ENCODE measurements at regions of chr11 and their contacts with region 1.

Region 1: DNA sequence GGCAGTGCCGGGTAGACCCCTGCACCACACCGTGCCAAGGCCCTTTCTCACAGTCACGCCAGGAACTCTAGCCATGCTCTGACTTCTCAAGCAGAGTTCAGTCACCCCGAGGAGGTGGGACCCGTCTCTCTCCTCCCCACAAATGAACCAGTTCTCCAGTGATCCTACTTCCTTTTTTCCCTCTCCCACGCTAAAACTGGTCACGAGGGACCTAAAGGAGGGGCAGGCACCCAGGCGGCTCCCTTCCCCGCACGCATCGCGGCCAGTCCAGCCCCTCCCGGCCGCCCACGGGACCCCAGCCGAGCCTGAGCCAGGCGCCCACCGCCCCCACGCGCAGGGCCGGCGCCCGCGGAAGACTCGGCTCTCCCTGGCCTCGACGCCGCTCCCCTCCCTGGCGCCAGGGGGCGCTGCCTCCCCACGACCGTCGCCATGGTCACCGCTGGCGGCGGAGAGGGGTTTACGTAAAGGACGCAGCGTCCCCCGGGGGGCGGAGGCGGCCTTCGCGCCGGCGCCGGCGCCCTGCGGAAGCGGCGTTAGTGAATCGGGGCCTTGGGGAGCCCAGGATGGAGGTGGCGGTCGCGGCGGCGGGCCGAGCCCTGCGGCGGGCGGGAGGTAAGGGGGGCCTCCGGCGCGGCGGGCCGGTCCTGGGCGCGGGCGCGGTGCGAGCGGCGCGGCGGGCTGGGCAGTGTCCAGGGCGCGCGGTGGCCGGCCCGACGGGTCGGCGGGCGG is at the start of gene DAGLA:
- DNase-seq: peak; percentile 49
- ATAC-seq: peak; percentile 9
- H3K4me3 ChIP-seq: peak within 1 kb of the TSS; percentile 57 to 79 (median 74)
- H3K27ac ChIP-seq: peak within 1 kb of the TSS; percentile 68
- H3K4me1 ChIP-seq: peaks cover 67% of the 10 kb centered on the region
- H3K27me3 ChIP-seq: peaks cover 0 to 1% of the 10 kb centered on the region in 2 experiments; a peak in 2 of 5 replicates
- CTCF ChIP-seq: peak; percentile 92
- EP300 ChIP-seq: no peak
- POLR2A ChIP-seq: no peak
- RAD21 ChIP-seq: peak; percentile 83
- total RNA-seq, gene DAGLA: 2.3 and 3.9 TPM in 2 replicates

Region 2: DNA sequence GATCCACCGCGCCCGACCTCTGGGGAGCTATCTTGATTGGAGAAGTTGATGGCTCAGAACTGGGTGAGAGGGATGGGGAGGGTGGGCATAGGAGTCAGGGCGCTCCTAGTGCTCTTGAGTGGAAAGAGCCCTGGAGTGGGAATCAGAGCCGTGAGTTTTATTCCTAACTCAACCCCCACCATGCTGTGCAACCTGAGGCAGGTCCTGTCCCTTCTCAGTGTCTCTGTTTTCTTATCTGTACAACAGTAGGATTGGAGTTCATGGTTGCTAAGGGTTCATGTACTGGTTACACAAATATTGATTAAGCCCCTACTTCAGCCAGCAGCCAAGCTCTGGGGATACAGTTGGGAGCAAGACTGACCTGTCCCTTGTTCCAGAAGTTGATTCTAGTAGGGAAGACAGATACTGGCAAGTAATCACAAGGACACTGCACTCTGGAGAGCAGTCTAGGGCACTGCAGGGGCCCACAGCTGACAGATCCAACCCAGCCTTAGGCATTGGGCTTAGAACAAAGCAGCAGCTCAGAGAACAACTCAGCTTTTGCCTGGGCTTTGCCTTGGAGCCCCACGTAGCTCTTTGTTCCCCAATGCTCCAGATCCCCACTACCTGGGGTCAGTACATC is 12.3 kb before region 1 on chr11:
- CTCF ChIA-PET with region 1: interaction called, 4 read pairs
- POLR2A ChIA-PET with region 1: interaction called, 42 read pairs
- in situ Hi-C with region 1: no loop called
- intact Hi-C with region 1: no loop called
- DNase-seq: no peak
- ATAC-seq: peak; percentile 71
- H3K4me3 ChIP-seq: peak overlapping the region; percentile 16 to 55 (median 23); a peak in 4 of 6 replicates
- H3K27ac ChIP-seq: peak overlapping the region; percentile 69
- H3K4me1 ChIP-seq: peaks cover 56% of the 10 kb centered on the region
- H3K27me3 ChIP-seq: no peaks in the 10 kb centered on the region
- CTCF ChIP-seq: peak; percentile 28; the same call in 1 of the 2 replicates
- EP300 ChIP-seq: no peak
- POLR2A ChIP-seq: no peak
- RAD21 ChIP-seq: no peak

Region 3: GRCh38 chr11:61694730-61695706 is 15.0 kb after region 1 on chr11:
- CTCF ChIA-PET with region 1: no interaction called
- POLR2A ChIA-PET with region 1: interaction called, 17 read pairs
- in situ Hi-C with region 1: no loop called
- intact Hi-C with region 1: loop called (anchors 2 kb)
- DNase-seq: peak; percentile 44
- ATAC-seq: peak; percentile 78
- H3K4me3 ChIP-seq: no peak overlapping the region
- H3K27ac ChIP-seq: no peak overlapping the region
- H3K4me1 ChIP-seq: peaks cover 49% of the 10 kb centered on the region
- H3K27me3 ChIP-seq: no peaks in the 10 kb centered on the region
- CTCF ChIP-seq: peak; percentile 38
- EP300 ChIP-seq: no peak
- POLR2A ChIP-seq: no peak
- RAD21 ChIP-seq: 0 out of 2 replicates have a peak, but pooled peaks have one; percentile 37

Region 4: GRCh38 chr11:61701242-61701886 is 21.3 kb after region 1 on chr11:
- CTCF ChIA-PET with region 1: interaction called, 4 read pairs
- POLR2A ChIA-PET with region 1: interaction called, 7 read pairs
- in situ Hi-C with region 1: no loop called
- intact Hi-C with region 1: loop called (anchors 2 kb)
- DNase-seq: peak; percentile 37
- ATAC-seq: peak; percentile 73
- H3K4me3 ChIP-seq: no peak overlapping the region
- H3K27ac ChIP-seq: no peak overlapping the region
- H3K4me1 ChIP-seq: peaks cover 26% of the 10 kb centered on the region
- H3K27me3 ChIP-seq: no peaks in the 10 kb centered on the region
- CTCF ChIP-seq: peak; percentile 51
- EP300 ChIP-seq: no peak
- POLR2A ChIP-seq: no peak
- RAD21 ChIP-seq: 0 out of 2 replicates have a peak, but pooled peaks have one; percentile 26

Region 5: GRCh38 chr11:61733120-61733978 is 53.3 kb after region 1 on chr11:
- CTCF ChIA-PET with region 1: interaction called, 8 read pairs
- POLR2A ChIA-PET with region 1: interaction called, 16 read pairs
- in situ Hi-C with region 1: loop called (anchors 5 kb)
- intact Hi-C with region 1: loop called (anchors 2 kb)
- DNase-seq: peak; percentile 58
- ATAC-seq: peak; percentile 85
- H3K4me3 ChIP-seq: no peak overlapping the region
- H3K27ac ChIP-seq: no peak overlapping the region
- H3K4me1 ChIP-seq: no peaks in the 10 kb centered on the region
- H3K27me3 ChIP-seq: no peaks in the 10 kb centered on the region
- CTCF ChIP-seq: peak; percentile 98
- EP300 ChIP-seq: no peak
- POLR2A ChIP-seq: no peak
- RAD21 ChIP-seq: peak; percentile 86

Region 6: DNA sequence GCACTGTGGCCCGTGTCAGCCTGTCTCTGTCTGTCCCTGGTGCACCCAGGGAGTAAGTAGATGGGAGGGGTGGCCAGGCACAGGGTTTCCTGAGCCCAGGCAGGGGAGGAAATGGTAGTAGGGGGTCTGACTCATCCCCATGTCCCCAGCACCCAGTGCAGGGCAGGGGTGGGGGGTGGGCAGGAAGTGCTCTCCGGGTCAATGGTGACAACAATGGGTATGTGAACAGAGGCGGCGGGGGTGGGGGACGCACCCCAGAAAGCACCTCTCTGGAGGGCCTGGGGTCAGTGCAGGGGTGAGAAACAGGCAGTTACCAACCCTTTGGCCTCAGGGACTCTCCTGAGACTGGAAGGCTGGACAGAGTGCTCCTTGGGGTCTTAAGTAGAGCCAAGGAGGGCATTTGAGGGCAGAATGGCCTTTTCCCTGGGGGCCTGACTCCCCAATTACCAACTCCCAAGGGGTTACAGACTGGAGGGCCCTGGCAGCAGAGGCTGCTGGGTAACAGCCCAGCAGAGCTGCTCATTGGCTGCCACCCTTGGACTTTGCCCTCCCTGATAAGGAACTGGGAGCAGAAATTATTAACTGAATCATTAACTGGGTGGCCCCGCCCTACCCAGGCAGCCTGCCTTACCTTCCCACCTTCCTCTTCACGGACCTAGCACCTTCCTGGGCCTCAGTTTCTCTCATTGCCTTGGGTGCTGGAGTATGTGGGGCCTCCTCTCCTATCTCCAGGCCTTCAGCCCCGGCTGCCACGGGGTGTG is 76.6 kb after region 1 on chr11:
- CTCF ChIA-PET with region 1: no interaction called
- POLR2A ChIA-PET with region 1: interaction called, 14 read pairs
- in situ Hi-C with region 1: no loop called
- intact Hi-C with region 1: no loop called
- DNase-seq: peak; percentile 94
- ATAC-seq: peak; percentile 84
- H3K4me3 ChIP-seq: peak overlapping the region; percentile 32 to 69 (median 66)
- H3K27ac ChIP-seq: peak overlapping the region; percentile 100
- H3K4me1 ChIP-seq: peaks cover 71% of the 10 kb centered on the region
- H3K27me3 ChIP-seq: no peaks in the 10 kb centered on the region
- CTCF ChIP-seq: peak; percentile 10; the same call in 1 of the 2 replicates
- EP300 ChIP-seq: peak in 1 of 2 experiments; percentile 53; a peak in 2 of 4 replicates
- POLR2A ChIP-seq: peak in 1 of 2 experiments; percentile 96; a peak in 2 of 4 replicates
- RAD21 ChIP-seq: peak; percentile 33; the same call in 1 of the 2 replicates

Region 7: DNA sequence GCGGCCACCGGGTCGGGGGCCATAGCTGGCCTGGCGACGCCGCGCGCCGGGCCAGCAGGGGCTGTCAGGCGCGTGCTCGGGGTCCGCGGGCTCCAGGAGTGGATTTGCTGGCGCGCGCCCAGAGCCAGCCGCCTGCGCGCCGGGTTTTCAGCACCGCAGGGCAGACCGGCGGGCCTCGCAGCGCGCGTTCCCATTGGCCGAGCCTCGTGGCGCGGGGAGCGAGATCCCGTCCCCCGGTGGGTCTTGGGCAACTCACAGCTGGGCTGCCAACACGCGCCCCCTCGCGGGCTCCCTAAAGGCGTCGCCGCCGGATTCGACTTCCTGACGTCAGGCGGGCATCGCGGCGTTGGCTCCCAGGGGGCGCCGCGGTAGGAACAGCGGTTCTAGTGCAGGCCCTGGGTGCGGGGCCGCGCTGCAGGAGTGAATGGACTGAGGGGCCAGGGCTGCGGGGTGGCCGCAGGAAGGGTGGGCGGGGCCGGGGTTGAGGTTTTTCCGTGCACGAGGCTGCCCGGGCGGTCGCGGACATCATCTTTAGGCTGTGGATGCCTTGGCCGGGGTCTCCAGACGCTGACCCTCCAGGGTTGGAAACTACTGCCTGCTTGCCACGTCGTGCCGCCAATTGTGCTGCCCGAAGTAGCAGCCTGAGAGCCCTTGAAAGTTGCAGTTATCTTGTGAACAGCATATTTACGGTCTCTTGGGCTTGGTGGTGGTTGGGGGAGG is 136.8 kb after region 1 on chr11 and contains the start of gene FADS1:
- CTCF ChIA-PET with region 1: no interaction called
- POLR2A ChIA-PET with region 1: no interaction called
- in situ Hi-C with region 1: no loop called
- intact Hi-C with region 1: no loop called
- DNase-seq: peak; percentile 95
- ATAC-seq: peak; percentile 71
- H3K4me3 ChIP-seq: peak within 1 kb of the TSS; percentile 74 to 94 (median 81)
- H3K27ac ChIP-seq: peak within 1 kb of the TSS; percentile 99
- H3K4me1 ChIP-seq: peaks cover 52% of the 10 kb centered on the region
- H3K27me3 ChIP-seq: no peaks in the 10 kb centered on the region; a peak in 1 of 5 replicates
- CTCF ChIP-seq: peak; percentile 95
- EP300 ChIP-seq: 0 out of 4 replicates have a peak, but pooled peaks of 1 of the 2 experiments have one; percentile 10
- POLR2A ChIP-seq: no peak
- RAD21 ChIP-seq: peak; percentile 74; the same call in 1 of the 2 replicates
- total RNA-seq, gene FADS1: 65.8 and 108 TPM in 2 replicates